ENCODE measurements at regions of chr10 and their contacts with region 1.

Region 1: DNA sequence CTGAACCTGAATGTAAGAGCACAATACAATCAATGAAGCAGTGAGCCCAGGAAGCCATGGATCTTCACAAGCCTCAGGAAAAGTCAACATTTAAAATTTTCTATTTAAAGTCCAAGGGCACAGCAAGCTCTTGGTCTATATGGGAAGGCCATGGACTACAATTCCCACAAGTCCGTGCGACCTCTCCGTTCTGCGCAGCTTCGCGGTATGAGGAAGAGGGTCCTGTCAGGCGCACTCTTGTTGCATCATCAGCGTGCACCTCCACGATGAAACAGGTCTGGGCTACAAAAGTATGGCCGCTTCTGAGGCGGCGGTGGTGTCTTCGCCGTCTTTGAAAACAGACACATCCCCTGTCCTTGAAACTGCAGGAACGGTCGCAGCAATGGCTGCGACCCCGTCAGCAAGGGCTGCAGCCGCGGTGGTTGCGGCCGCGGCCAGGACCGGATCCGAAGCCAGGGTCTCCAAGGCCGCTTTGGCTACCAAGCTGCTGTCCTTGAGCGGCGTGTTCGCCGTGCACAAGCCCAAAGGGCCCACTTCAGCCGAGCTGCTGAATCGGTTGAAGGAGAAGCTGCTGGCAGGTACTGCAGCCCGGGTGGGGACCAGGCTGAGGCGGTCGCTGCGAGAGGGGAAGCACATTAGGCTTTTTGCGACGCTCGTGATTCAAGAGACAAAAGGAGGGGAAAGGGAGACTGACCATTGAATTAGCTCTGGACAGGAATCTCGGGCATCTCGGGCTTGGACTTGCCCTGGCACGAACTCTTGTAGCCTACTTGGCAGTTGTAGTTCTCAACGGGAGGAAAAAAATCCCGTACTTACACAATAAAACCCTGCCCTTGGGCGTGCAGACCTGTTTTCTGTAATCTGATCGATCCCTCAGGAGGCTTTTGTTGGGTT is at the start of gene TRUB1:
- DNase-seq: peak; percentile 93
- ATAC-seq: peak; percentile 100
- H3K4me3 ChIP-seq: peak within 1 kb of the TSS; percentile 81 to 99 (median 93)
- H3K4me3 Mint-ChIP-seq: peak within 1 kb of the TSS; percentile 95
- H3K27ac ChIP-seq: peak within 1 kb of the TSS; percentile 77 to 83
- H3K27ac Mint-ChIP-seq: peak within 1 kb of the TSS; percentile 92
- H3K4me1 ChIP-seq: peaks cover 15 to 16% of the 10 kb centered on the region in 2 donors
- H3K4me1 Mint-ChIP-seq: peaks cover 34% of the 10 kb centered on the region
- H3K27me3 ChIP-seq: no peaks in the 10 kb centered on the region
- H3K27me3 Mint-ChIP-seq: no peaks in the 10 kb centered on the region
- CTCF ChIP-seq: no peak
- total RNA-seq, gene TRUB1: 11.2 and 15.7 TPM in 2 replicates

Region 2: DNA sequence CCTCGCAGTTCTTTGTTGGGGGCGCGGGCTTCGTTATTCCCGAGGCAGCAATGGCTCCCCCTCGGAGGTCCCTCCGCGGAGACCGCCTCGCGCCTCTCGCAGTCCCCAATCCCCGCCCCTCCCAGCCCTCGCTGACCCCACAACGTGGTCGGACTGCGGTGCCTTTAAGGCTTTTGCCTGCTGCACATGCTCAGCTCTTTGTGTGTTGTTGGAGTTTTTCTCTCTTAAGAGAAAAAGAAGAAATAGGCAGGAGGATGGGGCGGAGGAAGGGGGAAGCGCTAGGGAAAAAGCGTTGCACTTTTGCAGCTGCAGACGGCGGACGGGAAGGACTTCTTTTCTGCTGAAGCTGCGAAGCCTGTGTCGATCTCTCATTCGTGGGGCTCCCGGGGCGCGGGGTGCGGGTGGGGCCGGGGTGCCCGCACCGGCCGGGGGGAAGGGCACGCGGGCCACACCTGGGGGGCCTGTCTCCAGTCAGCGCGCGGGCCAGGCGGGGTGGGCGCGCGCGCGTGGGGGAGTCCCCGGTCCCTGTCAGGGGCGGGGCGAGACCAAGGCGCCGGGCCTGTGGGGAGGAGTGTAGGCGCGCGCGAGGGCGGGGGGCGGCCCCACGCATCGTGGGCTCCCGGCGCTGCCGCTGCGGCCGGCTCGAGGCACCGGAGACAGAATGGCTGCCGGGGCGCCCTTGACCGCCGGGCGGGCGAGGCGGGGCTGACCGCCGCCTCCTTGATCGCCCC is 154.5 kb after region 1 on chr10:
- CTCF ChIA-PET with region 1: no interaction called
- POLR2A ChIA-PET with region 1: no interaction called
- intact Hi-C with region 1: loop called (anchors 2 kb)
- DNase-seq: peak; percentile 72
- ATAC-seq: peak; percentile 76
- H3K4me3 ChIP-seq: peak overlapping the region; percentile 16 to 61 (median 61)
- H3K4me3 Mint-ChIP-seq: peak overlapping the region; percentile 90
- H3K27ac ChIP-seq: no peak overlapping the region
- H3K27ac Mint-ChIP-seq: no peak overlapping the region
- H3K4me1 ChIP-seq: peaks cover 10 to 16% of the 10 kb centered on the region in 2 donors
- H3K4me1 Mint-ChIP-seq: peaks cover 16% of the 10 kb centered on the region
- H3K27me3 ChIP-seq: peaks cover 0 to 32% (median 20%) of the 10 kb centered on the region in 4 experiments
- H3K27me3 Mint-ChIP-seq: peaks cover 41% of the 10 kb centered on the region
- CTCF ChIP-seq: no peak